Activated CD8-positive, alpha-beta memory T cell treated with anti-CD3 and anti-CD28 coated beads, Interleukin-2, amount 10 ng/mL, durations not matched to agents 7 days and 5 days (primary cell): ENCODE measurements at regions of chr1 and their contacts with region 1.

Region 1: DNA sequence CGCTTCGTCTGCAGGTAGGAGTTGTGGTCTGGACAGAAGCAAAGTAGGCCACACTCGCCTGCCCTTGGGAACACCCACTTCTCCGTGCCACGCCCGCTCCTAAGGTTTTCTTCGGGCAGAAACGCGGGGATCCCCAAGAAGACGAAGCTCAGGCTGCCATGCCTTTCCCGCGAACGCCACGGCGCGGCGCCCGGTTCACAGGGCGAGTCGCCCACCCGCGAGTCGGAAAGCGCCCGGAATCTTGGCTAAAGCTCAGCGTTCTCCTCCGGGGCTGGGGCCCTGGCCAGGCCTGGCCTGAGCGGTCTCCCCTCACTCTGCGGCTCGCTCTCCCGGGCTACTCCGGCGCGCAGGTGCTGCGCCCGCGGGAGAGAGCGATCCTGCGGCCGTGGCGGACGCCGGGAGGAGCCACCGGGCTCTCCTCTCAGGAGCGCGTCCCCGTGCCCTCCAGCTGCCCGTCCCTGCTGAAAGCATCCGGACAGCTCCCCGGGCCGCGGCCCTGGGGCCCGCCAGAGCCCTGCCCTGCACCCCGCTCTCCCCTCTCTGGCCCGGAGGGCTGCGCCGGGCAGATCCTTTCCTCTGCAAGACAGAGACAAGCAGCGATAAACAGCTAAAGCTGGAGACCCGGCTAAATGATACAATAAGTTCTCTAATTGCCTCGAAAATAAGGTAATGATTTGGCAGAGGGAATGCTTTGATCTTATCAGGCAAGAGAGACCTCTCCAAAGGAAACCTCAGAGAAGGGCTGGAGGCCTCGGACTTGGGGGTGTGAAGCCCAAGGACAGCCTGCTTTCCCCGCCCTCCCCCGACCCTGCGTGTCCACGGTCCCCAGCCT is 6.7 kb upstream of the WNT2B start:
- DNase-seq: peak; percentile 68
- ATAC-seq: peak; percentile 78
- H3K4me3 Mint-ChIP-seq: peak overlapping the region; percentile 49
- H3K27ac Mint-ChIP-seq: no peak overlapping the region
- H3K4me1 Mint-ChIP-seq: peaks cover 9% of the 10 kb centered on the region
- H3K27me3 Mint-ChIP-seq: peaks cover 72% of the 10 kb centered on the region

Region 2: GRCh38 chr1:112363636-112364035 is 138.4 kb before region 1 on chr1:
- CTCF ChIA-PET with region 1: no interaction called
- DNase-seq: no peak
- ATAC-seq: no peak
- H3K4me3 Mint-ChIP-seq: no peak overlapping the region
- H3K27ac Mint-ChIP-seq: no peak overlapping the region
- H3K4me1 Mint-ChIP-seq: no peaks in the 10 kb centered on the region
- H3K27me3 Mint-ChIP-seq: peaks cover 55% of the 10 kb centered on the region

Region 3: GRCh38 chr1:112513112-112513870 is 11.3 kb after region 1 on chr1:
- CTCF ChIA-PET with region 1: interaction called, 10 read pairs
- DNase-seq: no peak
- ATAC-seq: no peak
- H3K4me3 Mint-ChIP-seq: no peak overlapping the region
- H3K27ac Mint-ChIP-seq: no peak overlapping the region
- H3K4me1 Mint-ChIP-seq: peaks cover 6% of the 10 kb centered on the region
- H3K27me3 Mint-ChIP-seq: peaks cover 23% of the 10 kb centered on the region

Region 4: DNA sequence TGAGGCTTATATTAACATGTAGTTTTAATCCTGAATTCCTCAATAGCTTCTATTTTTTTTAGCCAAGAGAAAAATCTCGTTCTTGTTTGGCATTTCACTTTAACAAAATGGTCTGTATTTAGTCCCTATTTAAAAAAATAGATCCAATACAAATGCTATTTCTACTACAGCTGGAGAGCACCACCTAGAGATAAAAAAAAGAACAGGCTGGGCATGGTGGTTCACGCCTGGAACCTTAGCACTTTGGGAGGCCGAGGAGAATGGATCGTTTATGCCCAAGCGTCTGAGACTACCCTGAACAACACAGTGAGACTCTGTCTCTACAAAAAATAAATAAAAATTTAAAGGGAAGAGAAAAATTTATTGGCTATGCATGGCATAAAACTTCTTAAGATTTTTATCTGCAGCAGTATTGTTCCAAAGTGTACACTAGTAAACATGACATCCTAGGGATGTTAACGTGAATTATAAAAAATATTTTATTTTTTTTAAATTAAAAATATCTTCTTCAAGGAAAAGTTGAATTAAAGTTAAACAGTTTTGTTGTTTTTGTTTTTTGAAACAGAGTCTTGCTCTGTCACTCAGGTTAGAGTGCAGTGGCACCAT is 112.5 kb after region 1 on chr1:
- CTCF ChIA-PET with region 1: interaction called, 66 read pairs
- DNase-seq: no peak
- ATAC-seq: no peak
- H3K4me3 Mint-ChIP-seq: no peak overlapping the region
- H3K27ac Mint-ChIP-seq: no peak overlapping the region
- H3K4me1 Mint-ChIP-seq: peaks cover 30% of the 10 kb centered on the region
- H3K27me3 Mint-ChIP-seq: no peaks in the 10 kb centered on the region

Region 5: GRCh38 chr1:112706908-112707663 is 205.1 kb after region 1 on chr1 and contains the start of gene RHOC:
- CTCF ChIA-PET with region 1: interaction called, 24 read pairs
- DNase-seq: peak; percentile 80
- ATAC-seq: peak; percentile 76
- H3K4me3 Mint-ChIP-seq: peak within 1 kb of the TSS; percentile 75
- H3K27ac Mint-ChIP-seq: peak within 1 kb of the TSS; percentile 89
- H3K4me1 Mint-ChIP-seq: peaks cover 44% of the 10 kb centered on the region
- H3K27me3 Mint-ChIP-seq: peaks cover 30% of the 10 kb centered on the region
- total RNA-seq, gene RHOC: 105 to 130 TPM

Region 6: GRCh38 chr1:112715264-112716053 is 213.4 kb after region 1 on chr1 and contains the start of gene PPM1J:
- CTCF ChIA-PET with region 1: interaction called, 24 read pairs
- DNase-seq: peak; percentile 99
- ATAC-seq: peak; percentile 93
- H3K4me3 Mint-ChIP-seq: peak within 1 kb of the TSS; percentile 80
- H3K27ac Mint-ChIP-seq: peak within 1 kb of the TSS; percentile 69
- H3K4me1 Mint-ChIP-seq: peaks cover 24% of the 10 kb centered on the region
- H3K27me3 Mint-ChIP-seq: peaks cover 40% of the 10 kb centered on the region
- total RNA-seq, gene PPM1J: 0.26 TPM in 1 of 2 experiments, not detected in the other